Aorta (tissue), 5 donors: ENCODE measurements at regions of chrX and their contacts with region 1.

Region 1: GRCh38 chrX:45824471-45824870 is 623.8 kb upstream of the DIPK2B start:
- DNase-seq: peak; percentile 63 to 89
- ATAC-seq: peak; percentile 66
- H3K4me3 ChIP-seq: no peak overlapping the region
- H3K27ac ChIP-seq: no peak overlapping the region
- H3K4me1 ChIP-seq: no peaks in the 10 kb centered on the region
- H3K27me3 ChIP-seq: no peaks in the 10 kb centered on the region

Region 2: DNA sequence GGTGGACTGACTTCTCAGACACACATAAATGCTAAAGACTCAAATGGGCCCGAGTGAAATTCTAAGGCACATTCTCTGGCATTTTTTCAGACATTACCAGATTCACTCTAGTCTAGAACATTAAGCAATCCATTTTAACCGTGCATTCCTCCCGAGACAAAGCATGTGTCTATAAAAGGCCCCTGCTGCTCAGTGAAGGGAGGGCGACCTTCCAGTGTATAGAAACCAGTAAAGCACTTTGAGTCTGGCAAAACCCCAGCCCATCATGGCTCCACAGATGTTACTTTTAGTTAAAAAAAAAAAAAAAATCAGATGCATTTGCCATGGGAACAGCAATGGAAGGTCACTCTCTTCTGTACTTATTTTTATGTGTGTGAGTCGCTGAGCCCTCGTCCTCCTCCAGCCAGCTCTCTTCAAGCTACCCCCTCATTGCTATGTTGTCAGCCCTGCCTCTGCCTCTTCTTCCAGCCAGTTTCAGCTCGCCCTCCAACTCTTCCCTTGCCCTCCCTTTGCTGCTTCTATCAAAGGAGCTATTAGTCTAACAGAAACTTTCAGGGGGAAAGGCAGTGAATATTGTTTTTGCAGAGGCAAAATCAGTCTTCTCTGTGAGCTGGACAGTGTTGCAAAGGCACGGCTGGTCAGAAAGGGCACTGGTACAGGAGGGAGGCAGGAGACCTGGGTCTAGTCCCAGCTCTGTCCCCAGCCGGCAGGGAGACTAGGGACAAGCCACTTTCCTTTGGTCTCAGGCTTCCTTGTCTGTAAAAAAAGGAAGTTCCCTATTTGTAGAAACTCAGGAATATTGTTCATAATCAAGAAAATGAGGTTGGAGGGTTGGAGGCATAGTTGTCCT is 76.5 kb after region 1 on chrX:
- intact Hi-C with region 1: no loop called
- DNase-seq: no peak
- ATAC-seq: no peak
- H3K4me3 ChIP-seq: no peak overlapping the region
- H3K27ac ChIP-seq: no peak overlapping the region
- H3K4me1 ChIP-seq: peaks cover 0 to 2% of the 10 kb centered on the region in 2 donors
- H3K27me3 ChIP-seq: no peaks in the 10 kb centered on the region

Region 3: GRCh38 chrX:46236411-46236810 is 411.9 kb after region 1 on chrX:
- intact Hi-C with region 1: no loop called
- DNase-seq: no peak
- ATAC-seq: no peak
- H3K4me3 ChIP-seq: no peak overlapping the region
- H3K27ac ChIP-seq: no peak overlapping the region
- H3K4me1 ChIP-seq: no peaks in the 10 kb centered on the region
- H3K27me3 ChIP-seq: no peaks in the 10 kb centered on the region

Region 4: DNA sequence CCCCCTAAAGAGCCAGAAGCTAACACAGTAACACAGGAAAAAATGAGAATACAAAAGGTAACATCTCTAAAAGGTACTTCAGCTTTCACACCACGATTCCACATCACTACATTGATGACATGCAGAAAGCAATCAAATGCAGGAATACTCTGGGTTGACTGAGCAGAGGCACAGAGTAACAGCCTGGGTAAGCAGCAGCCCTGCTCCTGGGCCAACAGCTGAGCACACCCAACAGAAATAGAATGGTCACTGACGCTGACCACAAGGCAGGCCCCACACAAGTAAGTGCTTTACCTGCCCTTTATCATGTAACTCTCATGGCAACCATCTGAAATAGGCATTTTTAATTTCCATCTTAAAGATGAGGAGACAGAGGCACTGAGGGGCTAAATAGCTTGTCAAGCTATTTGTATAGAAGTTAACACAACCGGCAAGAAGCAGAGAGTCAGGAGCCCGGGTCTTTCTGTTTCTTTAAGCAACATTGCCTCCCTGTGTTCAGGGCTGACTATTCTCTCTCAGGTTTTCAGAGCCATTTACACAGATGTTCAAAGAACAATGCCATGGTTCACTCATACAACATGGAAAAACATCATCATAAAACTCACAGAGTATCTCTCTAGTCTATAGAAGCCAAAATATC is 551.9 kb after region 1 on chrX:
- intact Hi-C with region 1: loop called (anchors 10 kb)
- DNase-seq: no peak
- ATAC-seq: peak; percentile 62
- H3K4me3 ChIP-seq: no peak overlapping the region
- H3K27ac ChIP-seq: no peak overlapping the region
- H3K4me1 ChIP-seq: no peaks in the 10 kb centered on the region
- H3K27me3 ChIP-seq: no peaks in the 10 kb centered on the region